Sigmoid colon (tissue), 7 donors: ENCODE measurements at regions of chr16 and their contacts with region 1.

Region 1: DNA sequence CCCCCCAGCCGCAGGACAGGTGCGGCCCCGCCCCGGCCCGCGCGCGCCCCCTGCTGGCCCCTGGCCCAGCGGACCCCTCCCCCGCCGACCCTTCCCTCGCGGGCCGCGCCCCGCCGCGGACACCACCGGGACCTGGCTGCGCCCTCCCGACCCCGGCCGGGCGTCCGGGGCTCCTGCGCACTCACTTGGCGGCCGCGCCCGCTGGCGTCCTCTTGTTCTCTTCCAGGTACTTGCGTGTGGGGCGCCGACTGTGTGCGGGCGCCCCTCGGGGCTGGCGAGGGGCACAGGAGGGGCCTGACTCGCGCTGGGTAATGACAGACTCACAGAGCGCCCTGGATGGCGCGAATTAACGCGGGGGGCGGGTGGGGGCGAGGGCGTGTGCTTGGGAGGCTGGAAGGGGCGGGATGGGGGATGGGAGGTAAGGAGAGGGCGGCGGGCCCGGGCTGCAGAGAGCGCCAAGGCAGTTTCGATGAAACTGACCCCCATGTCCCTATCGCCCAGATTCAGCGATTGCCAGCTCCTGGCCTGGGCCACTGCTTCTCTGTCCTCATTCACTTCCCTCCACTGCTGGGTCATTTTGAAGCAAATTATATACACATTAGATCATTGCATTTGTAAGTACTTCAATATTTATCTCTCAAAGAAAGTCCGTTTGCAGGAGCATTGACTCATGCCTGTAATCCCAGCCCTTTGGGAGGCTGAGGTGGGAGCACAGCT is 445 bp upstream of the DBNDD1 start:
- DNase-seq: no peak
- H3K4me3 ChIP-seq: peak overlapping the region; percentile 29 to 79 (median 69)
- H3K27ac ChIP-seq: peak overlapping the region in 3 of 4 donors; percentile 2 to 24 (median 15)
- H3K4me1 ChIP-seq: peaks cover 0 to 32% (median 28%) of the 10 kb centered on the region in 4 donors
- H3K27me3 ChIP-seq: peaks cover 0 to 6% (median 4%) of the 10 kb centered on the region in 3 donors
- CTCF ChIP-seq: peak in 1 of 4 experiments; percentile 19
- EP300 ChIP-seq: no peak
- POLR2A ChIP-seq: no peak

Region 2: GRCh38 chr16:89972244-89973234 is 47.2 kb before region 1 on chr16:
- intact Hi-C with region 1: loop called (anchors 5 kb)
- DNase-seq: peak; percentile 95
- H3K4me3 ChIP-seq: peak overlapping the region; percentile 76 to 97 (median 85)
- H3K27ac ChIP-seq: peak overlapping the region; percentile 92 to 100 (median 96)
- H3K4me1 ChIP-seq: peaks cover 0 to 31% (median 26%) of the 10 kb centered on the region in 4 donors
- H3K27me3 ChIP-seq: no peaks in the 10 kb centered on the region
- CTCF ChIP-seq: no peak
- EP300 ChIP-seq: no peak
- POLR2A ChIP-seq: peak; percentile 39 to 61

Region 3: DNA sequence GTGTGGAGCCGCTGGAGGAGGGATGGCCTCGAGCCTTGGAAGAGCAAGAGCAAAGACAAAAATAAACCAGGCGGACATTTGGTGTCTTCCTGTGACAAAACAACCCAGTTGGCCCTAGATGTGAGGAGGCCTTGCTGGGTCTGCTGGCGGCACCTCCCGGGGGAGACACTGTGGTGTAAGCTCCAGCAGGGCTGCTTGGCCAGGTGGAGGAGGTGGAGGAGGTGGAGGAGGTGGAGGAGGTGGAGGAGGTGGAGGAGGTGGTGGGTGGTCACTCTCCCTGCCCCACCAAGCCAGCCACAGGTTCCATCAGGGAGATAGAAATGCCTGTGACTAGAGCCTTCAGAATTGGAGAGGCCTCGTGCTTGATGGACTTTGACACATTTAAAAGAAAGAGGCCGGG is 32.5 kb before region 1 on chr16:
- intact Hi-C with region 1: no loop called
- DNase-seq: no peak
- H3K4me3 ChIP-seq: no peak overlapping the region
- H3K27ac ChIP-seq: no peak overlapping the region
- H3K4me1 ChIP-seq: no peaks in the 10 kb centered on the region
- H3K27me3 ChIP-seq: no peaks in the 10 kb centered on the region
- CTCF ChIP-seq: no peak
- EP300 ChIP-seq: no peak
- POLR2A ChIP-seq: no peak